ENCODE measurements at regions of chr14 and their contacts with region 1.

Region 1: DNA sequence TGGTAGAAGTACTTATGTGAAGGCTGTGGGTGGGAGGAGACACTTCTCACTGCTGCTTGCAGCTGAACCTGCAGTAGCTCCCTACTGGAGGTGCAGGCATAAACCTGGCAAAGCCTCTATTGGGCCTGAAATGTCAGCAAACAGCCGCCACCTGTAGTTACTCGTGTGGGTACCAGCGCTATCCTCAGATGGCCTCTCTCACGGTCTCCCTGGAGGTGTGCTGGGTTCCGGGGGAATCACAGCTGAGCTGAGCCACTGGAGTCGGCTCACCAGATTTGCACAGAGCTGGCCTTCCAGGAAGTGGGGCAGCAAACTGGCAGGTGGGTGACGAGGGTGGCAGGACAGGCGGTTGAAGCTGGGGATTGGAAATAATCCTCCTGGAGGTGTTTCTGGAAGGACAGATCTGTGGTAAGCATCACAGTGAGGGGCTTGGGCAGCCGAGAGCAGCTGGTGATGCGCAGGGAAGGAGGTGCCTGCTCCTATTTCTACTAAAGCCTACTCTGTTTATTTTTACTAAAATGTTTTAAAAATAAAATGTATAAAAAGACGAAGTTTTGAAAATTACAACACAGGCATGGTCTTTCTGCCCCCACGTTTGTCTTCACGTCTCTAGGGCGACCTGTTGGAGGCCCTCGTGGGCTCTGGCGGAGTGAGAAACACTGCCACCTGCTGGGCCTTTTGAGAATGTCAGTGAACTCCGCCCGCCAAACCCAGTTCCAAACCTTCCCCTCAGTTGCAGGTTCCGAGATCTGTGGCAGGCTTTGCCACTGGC is 67.8 kb upstream of the PLEKHG3 start:
- DNase-seq: peak; percentile 68 to 80
- H3K4me3 ChIP-seq: no peak overlapping the region
- H3K4me3 Mint-ChIP-seq: no peak overlapping the region
- H3K27ac Mint-ChIP-seq: no peak overlapping the region
- H3K4me1 ChIP-seq: peaks cover 46% of the 10 kb centered on the region
- H3K4me1 Mint-ChIP-seq: peaks cover 26% of the 10 kb centered on the region
- H3K27me3 ChIP-seq: no peaks in the 10 kb centered on the region
- H3K27me3 Mint-ChIP-seq: no peaks in the 10 kb centered on the region
- CTCF ChIP-seq: peak; percentile 82 to 87

Region 2: DNA sequence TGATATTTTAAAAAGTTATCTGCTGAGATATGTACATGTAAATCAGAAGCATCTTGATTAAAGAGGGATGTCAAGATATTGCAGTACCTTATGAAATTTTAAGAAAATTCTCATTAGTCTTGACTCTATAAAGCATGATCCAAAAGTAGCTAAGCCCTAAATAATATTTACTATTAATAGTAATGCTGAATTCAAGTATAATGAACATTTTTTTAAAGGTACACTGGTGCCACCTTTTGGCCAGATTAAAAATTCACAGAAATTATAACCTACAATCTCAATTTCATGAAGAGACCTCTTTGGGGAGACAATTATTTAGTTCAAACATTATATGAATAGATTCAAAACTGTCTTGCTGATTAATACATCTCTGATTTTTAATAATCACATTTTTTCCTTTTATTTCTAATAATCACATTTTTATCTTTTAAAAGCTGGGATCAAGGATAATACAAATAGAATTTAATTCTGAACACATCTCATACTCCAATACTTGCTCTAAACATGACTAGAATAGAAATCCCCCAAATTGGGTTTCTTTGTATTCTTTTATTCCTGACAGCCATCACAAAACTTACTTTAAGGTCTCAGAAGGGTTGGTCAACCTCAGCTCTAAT is 157.7 kb before region 1 on chr14:
- CTCF ChIA-PET with region 1: no interaction called
- POLR2A ChIA-PET with region 1: interaction called, 10 read pairs
- intact Hi-C with region 1: no loop called
- DNase-seq: no peak
- H3K4me3 ChIP-seq: no peak overlapping the region
- H3K4me3 Mint-ChIP-seq: no peak overlapping the region
- H3K27ac Mint-ChIP-seq: no peak overlapping the region
- H3K4me1 ChIP-seq: peaks cover 9% of the 10 kb centered on the region; the same call in 1 of the 2 replicates
- H3K4me1 Mint-ChIP-seq: peaks cover 12% of the 10 kb centered on the region
- H3K27me3 ChIP-seq: no peaks in the 10 kb centered on the region
- H3K27me3 Mint-ChIP-seq: no peaks in the 10 kb centered on the region
- CTCF ChIP-seq: peak in 1 of 2 experiments; percentile 14

Region 3: DNA sequence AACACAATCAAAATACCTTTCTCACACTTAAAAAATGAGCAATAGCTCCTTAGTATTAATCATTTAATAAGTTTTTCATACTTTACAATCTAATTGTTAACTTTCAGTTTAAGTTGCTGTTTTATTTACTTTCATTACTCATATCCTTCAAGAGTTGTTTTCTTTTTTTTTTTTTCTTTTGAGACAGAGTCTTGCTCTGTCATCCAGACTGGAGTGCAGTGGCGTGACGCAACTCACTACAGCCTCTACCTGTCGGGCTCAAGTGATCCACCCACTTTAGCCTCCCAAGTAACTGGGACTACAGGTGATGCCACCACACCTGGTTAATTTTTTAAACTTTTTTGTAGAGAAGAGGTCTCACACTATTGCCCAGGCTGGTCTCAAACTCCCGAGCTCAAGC is 115.7 kb before region 1 on chr14:
- CTCF ChIA-PET with region 1: no interaction called
- POLR2A ChIA-PET with region 1: no interaction called
- intact Hi-C with region 1: no loop called
- DNase-seq: no peak
- H3K4me3 ChIP-seq: no peak overlapping the region
- H3K4me3 Mint-ChIP-seq: no peak overlapping the region
- H3K27ac Mint-ChIP-seq: no peak overlapping the region
- H3K4me1 ChIP-seq: no peaks in the 10 kb centered on the region
- H3K4me1 Mint-ChIP-seq: no peaks in the 10 kb centered on the region
- H3K27me3 ChIP-seq: no peaks in the 10 kb centered on the region
- H3K27me3 Mint-ChIP-seq: no peaks in the 10 kb centered on the region
- CTCF ChIP-seq: no peak